Activated naive CD8-positive, alpha-beta T cell treated with anti-CD3 and anti-CD28 coated beads, Interleukin-2, amount 10 ng/mL, durations not matched to agents 7 days and 5 days (primary cell): ENCODE measurements at regions of chr20 and their contacts with region 1.

Region 1: GRCh38 chr20:5606350-5606749 is 143.9 kb upstream of the SHLD1 start:
- DNase-seq: no peak
- ATAC-seq: no peak
- H3K4me3 Mint-ChIP-seq: peak overlapping the region; percentile 3
- H3K27ac Mint-ChIP-seq: peak overlapping the region; percentile 4
- H3K4me1 Mint-ChIP-seq: peaks cover 55% of the 10 kb centered on the region
- H3K27me3 Mint-ChIP-seq: no peaks in the 10 kb centered on the region

Region 2: GRCh38 chr20:5592823-5593739 is 13.3 kb before region 1 on chr20:
- POLR2A ChIA-PET with region 1: interaction called, 19 read pairs
- DNase-seq: no peak
- ATAC-seq: peak; percentile 53
- H3K4me3 Mint-ChIP-seq: peak overlapping the region; percentile 68
- H3K27ac Mint-ChIP-seq: peak overlapping the region; percentile 90
- H3K4me1 Mint-ChIP-seq: peaks cover 38% of the 10 kb centered on the region
- H3K27me3 Mint-ChIP-seq: no peaks in the 10 kb centered on the region